Naive thymus-derived CD4-positive, alpha-beta T cell (primary cell): ENCODE measurements at regions of chr4 and their contacts with region 1.

Region 1: DNA sequence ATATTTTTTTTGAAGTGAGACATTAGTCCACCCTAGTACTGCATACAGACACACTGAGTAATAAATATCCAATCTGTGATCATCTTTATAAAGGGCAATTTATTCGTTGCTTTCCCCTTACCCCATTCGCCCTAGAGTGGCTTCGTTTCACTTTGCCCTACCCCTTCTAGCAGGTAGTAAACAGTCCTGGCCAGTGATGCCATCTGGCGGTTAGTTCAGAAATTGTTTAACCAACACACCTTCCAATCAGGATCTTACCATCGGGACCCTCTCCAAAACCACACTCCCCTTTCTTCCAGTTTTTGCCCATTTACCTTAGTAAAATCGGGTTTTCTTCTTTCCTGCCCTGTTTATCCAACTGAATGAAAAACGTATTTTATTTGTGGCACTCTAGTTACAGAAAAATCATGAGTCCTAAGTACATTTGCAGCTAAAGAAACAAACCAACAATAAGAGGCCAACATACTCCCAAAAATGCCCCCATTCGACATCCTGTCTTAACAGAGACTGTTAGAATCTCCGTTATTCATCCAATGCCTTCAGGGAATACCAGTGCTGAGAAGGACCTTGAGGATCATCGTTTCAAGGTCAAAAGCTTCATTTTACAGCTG is 2.2 kb downstream of the PPA2 start:
- DNase-seq: peak; percentile 21 to 75 (median 69)
- ATAC-seq: peak; percentile 53
- H3K4me3 ChIP-seq: peak overlapping the region; percentile 25
- H3K4me3 Mint-ChIP-seq: peak overlapping the region; percentile 59 to 99 (median 82)
- H3K27ac ChIP-seq: peak overlapping the region; percentile 95
- H3K27ac Mint-ChIP-seq: peak overlapping the region; percentile 5 to 100 (median 44)
- H3K4me1 ChIP-seq: peaks cover 18 to 21% of the 10 kb centered on the region in 2 donors
- H3K4me1 Mint-ChIP-seq: peaks cover 42 to 66% (median 63%) of the 10 kb centered on the region in 7 donors
- H3K27me3 ChIP-seq: no peaks in the 10 kb centered on the region
- H3K27me3 Mint-ChIP-seq: peaks cover 0 to 5% (median 0%) of the 10 kb centered on the region in 5 donors

Region 2: GRCh38 chr4:104490770-104491480 is 980.7 kb before region 1 on chr4:
- CTCF ChIA-PET with region 1: no interaction called
- POLR2A ChIA-PET with region 1: no interaction called
- intact Hi-C with region 1: loop called in 1 of 2 experiments (anchors 5 kb)
- DNase-seq: peak in 8 of 9 donors; percentile 8 to 42 (median 20)
- ATAC-seq: peak; percentile 65
- H3K4me3 ChIP-seq: peak overlapping the region; percentile 63
- H3K4me3 Mint-ChIP-seq: peak overlapping the region; percentile 71 to 86 (median 82)
- H3K27ac ChIP-seq: no peak overlapping the region
- H3K27ac Mint-ChIP-seq: peak overlapping the region in 1 of 9 donors; percentile 92
- H3K4me1 ChIP-seq: peaks cover 0 to 13% of the 10 kb centered on the region in 2 donors
- H3K4me1 Mint-ChIP-seq: peaks cover 14 to 55% (median 35%) of the 10 kb centered on the region in 7 donors
- H3K27me3 ChIP-seq: peaks cover 0 to 20% of the 10 kb centered on the region in 2 donors
- H3K27me3 Mint-ChIP-seq: peaks cover 64 to 81% (median 77%) of the 10 kb centered on the region in 5 donors

Region 3: GRCh38 chr4:104930298-104930697 is 541.4 kb before region 1 on chr4:
- CTCF ChIA-PET with region 1: no interaction called
- POLR2A ChIA-PET with region 1: no interaction called
- intact Hi-C with region 1: loop called (anchors 1 kb)
- DNase-seq: no peak
- ATAC-seq: no peak
- H3K4me3 ChIP-seq: no peak overlapping the region
- H3K4me3 Mint-ChIP-seq: peak overlapping the region in 6 of 10 donors; percentile 11 to 52 (median 22)
- H3K27ac ChIP-seq: no peak overlapping the region
- H3K27ac Mint-ChIP-seq: peak overlapping the region in 3 of 9 donors; percentile 17 to 81 (median 62)
- H3K4me1 ChIP-seq: no peaks in the 10 kb centered on the region
- H3K4me1 Mint-ChIP-seq: peaks cover 7 to 44% (median 19%) of the 10 kb centered on the region in 7 donors
- H3K27me3 ChIP-seq: no peaks in the 10 kb centered on the region
- H3K27me3 Mint-ChIP-seq: peaks cover 0 to 12% (median 0%) of the 10 kb centered on the region in 5 donors

Region 4: DNA sequence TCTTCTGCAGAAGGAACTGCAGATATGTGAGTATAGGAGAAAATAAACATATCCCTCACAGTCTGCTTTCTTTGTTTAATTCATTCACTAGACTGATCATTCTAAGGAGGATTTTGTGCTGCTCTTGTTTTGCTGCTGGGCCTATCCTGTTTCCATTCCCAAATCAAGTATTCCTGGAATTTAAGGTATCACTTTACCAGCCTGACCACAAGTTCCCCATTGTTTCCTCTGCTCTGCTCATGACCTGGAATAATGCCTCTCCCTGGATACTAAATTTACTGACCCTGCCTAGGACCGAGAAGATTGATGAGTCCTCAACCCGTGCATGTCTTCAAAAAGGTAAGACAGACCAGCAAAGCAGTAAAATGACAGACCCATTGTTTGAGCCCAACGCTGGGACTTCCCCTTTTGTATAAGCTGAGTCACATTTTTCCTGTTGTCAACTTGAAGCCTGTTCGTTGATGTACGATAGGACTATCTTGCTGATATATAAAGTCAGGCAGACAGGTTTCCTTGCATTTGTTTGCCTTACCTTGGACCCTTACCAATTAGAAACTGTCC is 410.5 kb before region 1 on chr4:
- CTCF ChIA-PET with region 1: no interaction called
- POLR2A ChIA-PET with region 1: interaction called, 4 read pairs
- intact Hi-C with region 1: loop called in 1 of 2 experiments (anchors 5 kb)
- DNase-seq: peak in 1 of 9 donors; percentile 39
- ATAC-seq: peak; percentile 49
- H3K4me3 ChIP-seq: no peak overlapping the region
- H3K4me3 Mint-ChIP-seq: peak overlapping the region in 5 of 10 donors; percentile 4 to 64 (median 34)
- H3K27ac ChIP-seq: no peak overlapping the region
- H3K27ac Mint-ChIP-seq: peak overlapping the region in 3 of 9 donors; percentile 14 to 85 (median 26)
- H3K4me1 ChIP-seq: no peaks in the 10 kb centered on the region
- H3K4me1 Mint-ChIP-seq: peaks cover 10 to 30% (median 11%) of the 10 kb centered on the region in 7 donors
- H3K27me3 ChIP-seq: no peaks in the 10 kb centered on the region
- H3K27me3 Mint-ChIP-seq: no peaks in the 10 kb centered on the region

Region 5: GRCh38 chr4:105146276-105147015 is 325.2 kb before region 1 on chr4 and contains the start of gene TET2:
- CTCF ChIA-PET with region 1: interaction called, 12 read pairs
- POLR2A ChIA-PET with region 1: interaction called, 11 read pairs
- intact Hi-C with region 1: loop called (anchors 1 kb)
- DNase-seq: peak; percentile 66 to 85 (median 78)
- ATAC-seq: peak; percentile 89
- H3K4me3 ChIP-seq: peak within 1 kb of the TSS; percentile 97
- H3K4me3 Mint-ChIP-seq: peak within 1 kb of the TSS; percentile 95 to 100 (median 100)
- H3K27ac ChIP-seq: peak within 1 kb of the TSS; percentile 80
- H3K27ac Mint-ChIP-seq: peak within 1 kb of the TSS; percentile 92 to 100 (median 98)
- H3K4me1 ChIP-seq: peaks cover 0 to 6% of the 10 kb centered on the region in 2 donors
- H3K4me1 Mint-ChIP-seq: peaks cover 31 to 41% (median 34%) of the 10 kb centered on the region in 7 donors
- H3K27me3 ChIP-seq: no peaks in the 10 kb centered on the region
- H3K27me3 Mint-ChIP-seq: peaks cover 0 to 3% (median 0%) of the 10 kb centered on the region in 5 donors
- total RNA-seq, gene TET2: 15.2 to 78.4 (median 32.2) TPM

Region 6: GRCh38 chr4:105708530-105709391 is 237.1 kb after region 1 on chr4 and contains the starts of genes GSTCD and INTS12:
- CTCF ChIA-PET with region 1: interaction called, 5 read pairs
- POLR2A ChIA-PET with region 1: interaction called, 7 read pairs
- intact Hi-C with region 1: loop called (anchors 1 kb)
- DNase-seq: peak; percentile 73 to 88 (median 84)
- ATAC-seq: peak; percentile 98
- H3K4me3 ChIP-seq: peak within 1 kb of the TSS; percentile 92
- H3K4me3 Mint-ChIP-seq: peak within 1 kb of the TSS; percentile 94 to 100 (median 99)
- H3K27ac ChIP-seq: peak within 1 kb of the TSS; percentile 84
- H3K27ac Mint-ChIP-seq: peak within 1 kb of the TSS; percentile 92 to 100 (median 97)
- H3K4me1 ChIP-seq: peaks cover 7 to 10% of the 10 kb centered on the region in 2 donors
- H3K4me1 Mint-ChIP-seq: peaks cover 10 to 40% (median 27%) of the 10 kb centered on the region in 7 donors
- H3K27me3 ChIP-seq: no peaks in the 10 kb centered on the region
- H3K27me3 Mint-ChIP-seq: no peaks in the 10 kb centered on the region
- total RNA-seq, gene GSTCD: 5.8 to 9.2 (median 7.5) TPM
- total RNA-seq, gene INTS12: 14.8 to 20.4 (median 17.6) TPM